Head of caudate nucleus (tissue), 42 donors: ENCODE measurements at regions of chr13 and their contacts with region 1.

Region 1: GRCh38 chr13:106513025-106513983 is 22.2 kb downstream of the EFNB2 start:
- DNase-seq: no peak

Region 2: GRCh38 chr13:106528718-106529414 is 15.6 kb after region 1 on chr13:
- intact Hi-C with region 1: loop called (anchors 1 kb)
- DNase-seq: no peak

Region 3: DNA sequence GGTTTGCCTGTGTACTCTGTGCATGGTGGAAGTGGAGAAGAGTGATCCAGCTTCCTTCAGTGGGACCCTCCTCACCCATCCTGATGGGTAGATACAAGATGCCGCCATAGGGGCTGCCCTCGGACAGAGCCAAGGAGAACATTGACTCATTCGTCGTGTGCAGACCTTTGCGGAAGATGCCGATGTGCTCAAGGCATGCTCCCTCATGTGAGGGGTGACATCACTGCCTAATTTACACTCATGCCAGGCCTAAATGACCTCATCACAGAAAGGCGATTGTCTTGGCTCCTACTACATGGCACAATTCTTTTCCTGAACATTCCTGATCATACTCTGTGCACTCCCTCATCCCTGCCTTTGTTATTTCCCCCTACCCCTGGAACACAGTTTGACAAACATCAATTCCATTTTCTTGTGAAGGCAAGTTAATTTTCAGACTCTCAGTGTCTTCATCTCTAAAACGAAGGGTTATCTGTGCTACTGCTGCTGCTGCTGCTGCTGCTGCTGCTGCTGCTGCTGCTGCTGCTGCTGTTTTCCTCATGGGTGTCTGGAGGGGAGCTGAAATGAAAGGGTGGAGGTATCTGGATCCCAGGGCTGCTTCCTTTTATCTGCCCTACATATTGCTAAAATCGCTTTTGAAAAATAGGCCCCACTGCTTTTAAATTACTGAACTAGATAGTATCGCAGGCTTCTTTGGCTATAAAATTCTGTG is 201.1 kb after region 1 on chr13:
- intact Hi-C with region 1: no loop called
- DNase-seq: peak in 2 of 42 donors; percentile 35 to 55

Region 4: DNA sequence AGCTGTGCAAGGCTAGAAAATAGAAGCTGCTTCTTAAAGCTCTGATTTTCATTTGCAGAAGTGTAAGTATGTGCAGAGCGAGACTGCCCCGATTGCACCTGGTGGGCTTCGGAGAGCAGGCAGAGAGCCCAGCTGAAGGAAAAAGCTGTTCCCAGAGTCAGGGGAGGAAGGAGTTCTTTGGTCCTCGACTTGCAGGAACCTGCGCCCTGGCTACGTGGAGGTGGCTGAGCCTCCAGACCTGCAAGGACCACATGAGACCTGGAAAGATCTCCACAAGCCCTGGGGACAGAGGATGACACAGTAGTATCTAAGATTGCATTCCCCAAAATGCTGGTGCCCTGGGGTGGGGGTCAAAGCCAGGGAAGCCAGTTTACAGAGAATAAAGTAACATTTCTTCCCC is 289.7 kb after region 1 on chr13:
- intact Hi-C with region 1: no loop called
- DNase-seq: no peak